ENCODE measurements at regions of chr5 and their contacts with region 1.

Region 1: GRCh38 chr5:135185481-135186065 is 151.5 kb upstream of the PITX1 start:
- DNase-seq: no peak
- H3K4me3 ChIP-seq: no peak overlapping the region
- H3K4me3 Mint-ChIP-seq: no peak overlapping the region
- H3K27ac Mint-ChIP-seq: peak overlapping the region; percentile 91
- H3K4me1 ChIP-seq: peaks cover 49% of the 10 kb centered on the region
- H3K4me1 Mint-ChIP-seq: peaks cover 24% of the 10 kb centered on the region
- H3K27me3 ChIP-seq: no peaks in the 10 kb centered on the region
- H3K27me3 Mint-ChIP-seq: no peaks in the 10 kb centered on the region
- CTCF ChIP-seq: no peak

Region 2: GRCh38 chr5:134917070-134917815 is 268.3 kb before region 1 on chr5:
- CTCF ChIA-PET with region 1: interaction called, 20 read pairs
- POLR2A ChIA-PET with region 1: no interaction called
- intact Hi-C with region 1: loop called (anchors 1 kb)
- DNase-seq: peak in 1 of 2 experiments; percentile 44
- H3K4me3 ChIP-seq: no peak overlapping the region
- H3K4me3 Mint-ChIP-seq: no peak overlapping the region
- H3K27ac Mint-ChIP-seq: no peak overlapping the region
- H3K4me1 ChIP-seq: no peaks in the 10 kb centered on the region
- H3K4me1 Mint-ChIP-seq: peaks cover 11% of the 10 kb centered on the region
- H3K27me3 ChIP-seq: no peaks in the 10 kb centered on the region
- H3K27me3 Mint-ChIP-seq: no peaks in the 10 kb centered on the region
- CTCF ChIP-seq: peak; percentile 38 to 72

Region 3: DNA sequence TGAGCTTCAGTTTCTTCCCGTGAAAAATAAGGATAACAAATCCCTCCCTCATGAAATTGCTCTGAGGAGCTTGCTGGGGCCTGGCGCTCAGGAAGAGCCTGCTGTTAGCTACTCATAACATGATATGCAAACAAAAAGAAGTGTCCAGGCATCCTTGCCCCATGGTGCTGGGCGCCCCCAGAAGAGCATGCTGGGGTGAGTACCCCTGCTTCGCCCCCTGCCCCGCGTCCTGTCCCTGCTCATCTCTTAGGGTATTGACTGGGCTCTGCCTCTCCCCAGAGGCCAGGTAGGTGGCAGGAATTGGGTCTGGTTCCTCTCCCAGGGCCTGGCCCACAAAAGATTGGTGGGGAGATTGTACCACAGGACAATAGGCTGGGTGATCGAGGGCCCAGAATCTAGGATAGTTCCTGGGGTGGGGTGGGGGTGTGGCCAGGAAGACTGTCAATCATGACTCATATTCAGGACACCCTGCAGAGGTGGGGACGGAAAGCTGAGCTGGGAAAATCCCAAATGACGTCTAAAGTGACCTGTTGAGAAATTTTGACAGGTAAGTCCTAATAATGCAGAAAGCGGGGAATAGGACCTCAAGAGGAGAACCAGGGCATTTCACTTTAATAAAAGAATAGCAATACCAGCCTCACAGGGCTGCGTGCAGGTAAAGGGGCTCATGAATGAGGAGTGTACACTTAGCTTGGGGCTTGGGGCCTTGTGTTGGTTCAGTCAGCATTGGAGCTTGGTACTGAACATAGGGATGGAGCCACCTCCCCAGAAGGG is 160.4 kb before region 1 on chr5:
- CTCF ChIA-PET with region 1: interaction called, 4 read pairs
- POLR2A ChIA-PET with region 1: no interaction called
- intact Hi-C with region 1: loop called (anchors 2 kb)
- DNase-seq: peak; percentile 32 to 38
- H3K4me3 ChIP-seq: no peak overlapping the region
- H3K4me3 Mint-ChIP-seq: no peak overlapping the region
- H3K27ac Mint-ChIP-seq: no peak overlapping the region
- H3K4me1 ChIP-seq: peaks cover 23% of the 10 kb centered on the region
- H3K4me1 Mint-ChIP-seq: peaks cover 32% of the 10 kb centered on the region
- H3K27me3 ChIP-seq: no peaks in the 10 kb centered on the region
- H3K27me3 Mint-ChIP-seq: no peaks in the 10 kb centered on the region
- CTCF ChIP-seq: no peak

Region 4: GRCh38 chr5:135034236-135034962 is 151.2 kb before region 1 on chr5:
- CTCF ChIA-PET with region 1: interaction called, 6 read pairs
- POLR2A ChIA-PET with region 1: no interaction called
- intact Hi-C with region 1: loop called (anchors 2 kb)
- DNase-seq: peak; percentile 88 to 89
- H3K4me3 ChIP-seq: peak overlapping the region; percentile 83
- H3K4me3 Mint-ChIP-seq: peak overlapping the region; percentile 89
- H3K27ac Mint-ChIP-seq: peak overlapping the region; percentile 81
- H3K4me1 ChIP-seq: peaks cover 27% of the 10 kb centered on the region
- H3K4me1 Mint-ChIP-seq: peaks cover 31% of the 10 kb centered on the region
- H3K27me3 ChIP-seq: no peaks in the 10 kb centered on the region
- H3K27me3 Mint-ChIP-seq: no peaks in the 10 kb centered on the region
- CTCF ChIP-seq: no peak

Region 5: GRCh38 chr5:135066781-135067180 is 118.8 kb before region 1 on chr5:
- CTCF ChIA-PET with region 1: no interaction called
- POLR2A ChIA-PET with region 1: no interaction called
- intact Hi-C with region 1: no loop called
- DNase-seq: peak in 1 of 2 experiments; percentile 17
- H3K4me3 ChIP-seq: no peak overlapping the region
- H3K4me3 Mint-ChIP-seq: no peak overlapping the region
- H3K27ac Mint-ChIP-seq: no peak overlapping the region
- H3K4me1 ChIP-seq: no peaks in the 10 kb centered on the region
- H3K4me1 Mint-ChIP-seq: no peaks in the 10 kb centered on the region
- H3K27me3 ChIP-seq: no peaks in the 10 kb centered on the region
- H3K27me3 Mint-ChIP-seq: no peaks in the 10 kb centered on the region
- CTCF ChIP-seq: no peak

Region 6: DNA sequence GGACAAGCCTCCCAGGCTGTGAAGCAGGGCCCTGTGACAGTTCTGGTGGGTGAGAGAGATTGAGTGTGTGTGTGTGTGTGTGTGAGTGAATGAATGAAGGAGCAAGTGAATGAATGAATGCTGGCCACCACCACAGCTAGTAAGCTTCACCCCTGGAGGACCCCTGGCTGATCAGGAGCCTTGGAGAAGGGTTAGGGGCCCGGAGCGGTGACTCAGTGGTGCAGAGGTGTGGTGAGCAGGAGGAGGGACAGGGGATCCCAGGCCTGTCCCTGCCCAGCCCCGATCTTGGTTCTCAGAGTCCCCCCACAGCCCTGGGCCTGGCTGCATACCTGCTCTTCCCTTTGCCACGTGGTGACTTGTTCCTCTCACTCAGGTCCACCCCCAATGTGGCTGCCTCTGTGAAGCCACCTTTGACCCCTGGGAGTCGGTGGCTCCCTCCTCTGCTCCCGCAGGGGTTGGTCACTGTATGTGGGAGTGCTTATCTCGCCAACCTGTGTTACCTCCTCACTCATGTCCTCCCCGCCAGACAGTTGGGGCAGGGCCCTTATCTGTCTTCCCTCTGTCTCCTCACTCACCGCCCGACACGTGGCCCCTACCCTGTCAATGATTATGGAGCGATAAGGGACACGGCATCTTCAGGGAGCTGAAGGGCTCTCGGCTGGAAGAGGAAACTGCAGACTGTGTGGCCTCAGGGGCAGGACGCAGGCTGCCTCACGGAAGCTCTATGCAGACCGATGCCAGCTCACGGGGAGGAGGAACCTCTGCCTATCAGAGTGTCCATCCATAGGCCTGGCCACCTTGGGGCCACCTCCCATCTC is 51.7 kb before region 1 on chr5:
- CTCF ChIA-PET with region 1: interaction called, 4 read pairs
- POLR2A ChIA-PET with region 1: no interaction called
- intact Hi-C with region 1: loop called (anchors 1 kb)
- DNase-seq: peak; percentile 96 to 99
- H3K4me3 ChIP-seq: no peak overlapping the region
- H3K4me3 Mint-ChIP-seq: peak overlapping the region; percentile 39
- H3K27ac Mint-ChIP-seq: peak overlapping the region; percentile 91
- H3K4me1 ChIP-seq: peaks cover 59% of the 10 kb centered on the region
- H3K4me1 Mint-ChIP-seq: peaks cover 65% of the 10 kb centered on the region
- H3K27me3 ChIP-seq: no peaks in the 10 kb centered on the region
- H3K27me3 Mint-ChIP-seq: no peaks in the 10 kb centered on the region
- CTCF ChIP-seq: no peak

Region 7: DNA sequence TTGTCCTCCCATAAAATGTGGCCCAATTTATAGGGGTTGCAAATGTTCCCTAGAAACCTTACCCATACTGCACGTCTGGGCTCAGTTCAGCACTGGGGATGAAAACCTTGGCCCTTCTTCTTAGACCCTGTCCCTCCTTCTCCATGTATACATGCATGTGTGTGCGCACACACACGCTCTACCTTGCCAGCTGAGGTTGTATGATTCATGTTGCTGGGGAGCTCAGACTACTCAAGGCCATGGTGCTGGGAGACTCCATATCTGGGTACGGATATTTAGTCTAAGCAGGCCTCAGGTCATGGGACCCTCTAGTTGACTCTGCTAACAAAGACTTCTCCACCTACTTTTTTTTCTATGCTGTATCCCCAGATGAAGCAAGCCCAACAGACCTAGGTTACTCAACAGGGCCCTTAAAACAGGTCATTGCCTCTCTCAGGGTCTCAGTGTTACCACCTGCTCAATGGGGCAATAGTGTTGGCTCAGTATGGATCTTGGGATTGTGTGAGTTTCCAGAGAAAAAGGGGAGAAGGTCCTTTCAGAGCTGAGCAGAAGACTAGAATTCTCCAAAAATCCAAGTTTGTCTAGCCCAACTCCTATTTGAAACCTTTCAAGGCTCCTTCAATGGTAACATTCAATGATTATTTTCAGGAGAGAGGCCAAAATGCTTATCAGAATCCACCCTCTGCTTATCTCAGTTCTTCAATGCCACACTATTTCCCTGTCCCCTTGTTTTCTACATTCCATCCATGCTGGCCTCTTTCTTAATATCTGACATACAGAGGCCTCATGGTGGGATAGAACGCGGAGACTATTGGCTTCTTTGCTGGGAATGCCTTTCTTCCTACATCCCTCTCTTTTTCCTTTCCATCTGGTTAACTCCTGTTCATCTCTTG is 27.9 kb before region 1 on chr5:
- CTCF ChIA-PET with region 1: no interaction called
- POLR2A ChIA-PET with region 1: no interaction called
- intact Hi-C with region 1: loop called (anchors 2 kb)
- DNase-seq: no peak
- H3K4me3 ChIP-seq: no peak overlapping the region
- H3K4me3 Mint-ChIP-seq: peak overlapping the region; percentile 30
- H3K27ac Mint-ChIP-seq: peak overlapping the region; percentile 84
- H3K4me1 ChIP-seq: peaks cover 50% of the 10 kb centered on the region
- H3K4me1 Mint-ChIP-seq: peaks cover 50% of the 10 kb centered on the region
- H3K27me3 ChIP-seq: no peaks in the 10 kb centered on the region
- H3K27me3 Mint-ChIP-seq: no peaks in the 10 kb centered on the region
- CTCF ChIP-seq: no peak

Region 8: GRCh38 chr5:135174315-135175096 is 11.1 kb before region 1 on chr5:
- CTCF ChIA-PET with region 1: interaction called, 3 read pairs
- POLR2A ChIA-PET with region 1: interaction called, 11 read pairs
- intact Hi-C with region 1: no loop called
- DNase-seq: no peak
- H3K4me3 ChIP-seq: no peak overlapping the region
- H3K4me3 Mint-ChIP-seq: no peak overlapping the region
- H3K27ac Mint-ChIP-seq: peak overlapping the region; percentile 88
- H3K4me1 ChIP-seq: peaks cover 25% of the 10 kb centered on the region
- H3K4me1 Mint-ChIP-seq: peaks cover 31% of the 10 kb centered on the region
- H3K27me3 ChIP-seq: no peaks in the 10 kb centered on the region
- H3K27me3 Mint-ChIP-seq: no peaks in the 10 kb centered on the region
- CTCF ChIP-seq: no peak

Region 9: GRCh38 chr5:135319928-135320607 is 134.5 kb after region 1 on chr5:
- CTCF ChIA-PET with region 1: no interaction called
- POLR2A ChIA-PET with region 1: no interaction called
- intact Hi-C with region 1: no loop called
- DNase-seq: peak; percentile 44 to 51
- H3K4me3 ChIP-seq: no peak overlapping the region
- H3K4me3 Mint-ChIP-seq: no peak overlapping the region
- H3K27ac Mint-ChIP-seq: no peak overlapping the region
- H3K4me1 ChIP-seq: peaks cover 16% of the 10 kb centered on the region
- H3K4me1 Mint-ChIP-seq: peaks cover 18% of the 10 kb centered on the region
- H3K27me3 ChIP-seq: no peaks in the 10 kb centered on the region
- H3K27me3 Mint-ChIP-seq: no peaks in the 10 kb centered on the region
- CTCF ChIP-seq: peak; percentile 8 to 54

Region 10: GRCh38 chr5:135345956-135346731 is 160.6 kb after region 1 on chr5:
- CTCF ChIA-PET with region 1: no interaction called
- POLR2A ChIA-PET with region 1: no interaction called
- intact Hi-C with region 1: no loop called
- DNase-seq: no peak
- H3K4me3 ChIP-seq: no peak overlapping the region
- H3K4me3 Mint-ChIP-seq: no peak overlapping the region
- H3K27ac Mint-ChIP-seq: no peak overlapping the region
- H3K4me1 ChIP-seq: peaks cover 11% of the 10 kb centered on the region
- H3K4me1 Mint-ChIP-seq: no peaks in the 10 kb centered on the region
- H3K27me3 ChIP-seq: no peaks in the 10 kb centered on the region
- H3K27me3 Mint-ChIP-seq: no peaks in the 10 kb centered on the region
- CTCF ChIP-seq: no peak